ENCODE measurements at regions of chr3 and their contacts with region 1.

Region 1: GRCh38 chr3:73508330-73508954 is 116.3 kb downstream of the PDZRN3 start:
- DNase-seq: peak; percentile 50 to 51
- ATAC-seq: peak; percentile 79 to 80
- H3K4me3 ChIP-seq: no peak overlapping the region
- H3K27ac ChIP-seq: peak overlapping the region; percentile 57 to 70 (median 66)
- H3K4me1 ChIP-seq: peaks cover 43 to 60% of the 10 kb centered on the region in 2 donors
- H3K27me3 ChIP-seq: no peaks in the 10 kb centered on the region
- CTCF ChIP-seq: peak; percentile 62 to 81 (median 76)
- POLR2A ChIP-seq: no peak

Region 2: DNA sequence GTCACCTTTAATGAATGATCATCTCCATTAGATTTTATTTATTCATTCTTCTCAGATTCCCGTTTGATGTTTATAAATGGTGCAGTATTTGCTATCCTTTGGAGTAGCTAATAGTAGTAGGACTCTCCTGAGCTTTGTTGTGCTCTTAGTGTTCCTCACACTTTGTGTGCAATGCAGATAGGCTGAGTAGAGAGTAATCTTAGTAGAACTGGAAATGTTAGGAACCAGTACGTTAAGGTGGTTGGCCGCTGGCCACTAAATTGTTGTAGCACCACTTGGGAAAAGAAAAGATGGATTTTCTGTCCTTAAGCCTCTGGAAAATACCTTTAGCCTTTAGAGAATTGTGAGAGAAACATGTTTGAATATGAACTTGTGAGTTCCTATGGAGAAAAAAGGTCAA is 466.9 kb before region 1 on chr3:
- in situ Hi-C with region 1: no loop called
- intact Hi-C with region 1: no loop called
- DNase-seq: no peak
- ATAC-seq: no peak
- H3K4me3 ChIP-seq: no peak overlapping the region
- H3K27ac ChIP-seq: peak overlapping the region in 2 of 4 donors; percentile 22 to 47
- H3K4me1 ChIP-seq: peaks cover 51 to 57% of the 10 kb centered on the region in 2 donors
- H3K27me3 ChIP-seq: no peaks in the 10 kb centered on the region
- CTCF ChIP-seq: no peak
- POLR2A ChIP-seq: no peak

Region 3: GRCh38 chr3:73602170-73602569 is 93.7 kb after region 1 on chr3:
- in situ Hi-C with region 1: loop called in 1 of 4 experiments (anchors 10 kb)
- intact Hi-C with region 1: no loop called
- DNase-seq: no peak
- ATAC-seq: no peak
- H3K4me3 ChIP-seq: no peak overlapping the region
- H3K27ac ChIP-seq: no peak overlapping the region
- H3K4me1 ChIP-seq: peaks cover 67 to 80% of the 10 kb centered on the region in 2 donors
- H3K27me3 ChIP-seq: no peaks in the 10 kb centered on the region
- CTCF ChIP-seq: no peak
- POLR2A ChIP-seq: no peak

Region 4: DNA sequence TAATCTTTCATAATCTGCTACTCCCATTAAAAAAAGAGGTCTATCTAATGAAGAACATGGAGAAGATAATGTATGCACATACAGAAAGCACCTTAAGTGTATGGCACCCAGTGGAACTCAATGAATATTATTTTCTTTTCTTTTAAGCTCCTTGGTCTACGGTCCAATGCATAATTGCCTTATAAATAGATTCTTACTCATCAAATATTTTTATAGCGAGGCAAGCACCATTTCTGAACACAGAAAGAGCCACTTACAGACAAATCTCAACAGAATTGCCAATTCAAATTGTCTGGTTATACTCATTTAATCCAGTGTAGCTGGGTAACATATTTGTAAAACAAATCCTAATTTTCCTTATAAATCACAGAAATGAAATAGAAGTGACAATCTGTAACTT is 110.0 kb after region 1 on chr3:
- in situ Hi-C with region 1: loop called in 1 of 4 experiments (anchors 5 kb)
- intact Hi-C with region 1: loop called (anchors 1 kb)
- DNase-seq: no peak
- ATAC-seq: no peak
- H3K4me3 ChIP-seq: no peak overlapping the region
- H3K27ac ChIP-seq: peak overlapping the region; percentile 71 to 94 (median 84)
- H3K4me1 ChIP-seq: peaks cover 86 to 87% of the 10 kb centered on the region in 2 donors
- H3K27me3 ChIP-seq: no peaks in the 10 kb centered on the region
- CTCF ChIP-seq: no peak
- POLR2A ChIP-seq: no peak

Region 5: DNA sequence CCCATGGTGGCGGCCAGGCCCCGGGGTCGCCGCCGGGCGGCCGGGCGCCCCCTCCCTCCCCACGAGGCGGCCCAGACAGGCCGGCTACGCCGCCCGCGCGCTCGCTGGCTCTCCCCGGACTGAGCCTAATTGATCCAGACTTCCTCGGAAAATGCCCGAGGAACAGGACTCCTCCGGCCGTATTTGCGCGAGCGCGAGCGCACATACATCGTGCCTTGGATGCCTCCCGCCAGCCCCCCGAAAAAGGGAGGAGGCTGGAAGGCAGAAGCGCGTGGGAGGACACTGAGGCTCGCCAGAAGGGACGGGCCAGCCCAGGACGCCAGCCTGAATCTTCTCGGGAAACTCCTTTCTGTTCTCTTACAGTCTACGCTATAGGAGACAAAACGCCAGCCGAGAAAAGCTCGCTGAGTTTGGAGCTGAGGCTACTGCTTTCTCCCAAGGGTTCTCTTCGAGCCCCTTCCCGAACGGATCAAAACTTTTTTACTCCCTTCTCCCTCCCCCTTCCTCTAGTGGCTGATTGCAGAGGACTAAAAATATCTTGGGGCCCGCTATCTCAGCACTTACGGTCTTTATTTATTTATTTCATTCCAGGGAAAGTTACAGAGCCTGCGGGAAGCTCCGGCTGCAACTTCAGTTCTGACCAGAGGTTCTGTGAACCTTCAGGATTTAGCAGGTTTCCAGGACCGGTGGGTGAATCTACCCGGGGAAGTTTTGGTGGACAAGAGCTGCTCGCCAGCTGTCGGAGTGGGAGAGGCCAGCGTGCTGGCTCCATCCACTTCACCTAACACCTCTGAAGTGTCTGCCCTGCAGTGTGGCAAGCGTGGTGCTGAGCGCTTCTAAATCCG is 116.6 kb after region 1 on chr3 and contains the start of gene PDZRN3:
- in situ Hi-C with region 1: no loop called
- intact Hi-C with region 1: loop called (anchors 1 kb)
- DNase-seq: peak; percentile 41 to 44
- ATAC-seq: peak; percentile 46 to 48
- H3K4me3 ChIP-seq: peak within 1 kb of the TSS; percentile 71 to 93 (median 78)
- H3K27ac ChIP-seq: peak within 1 kb of the TSS; percentile 89 to 94 (median 92)
- H3K4me1 ChIP-seq: peaks cover 34 to 56% of the 10 kb centered on the region in 2 donors
- H3K27me3 ChIP-seq: no peaks in the 10 kb centered on the region
- CTCF ChIP-seq: peak in 1 of 5 experiments; percentile 3
- POLR2A ChIP-seq: peak; percentile 64 to 83
- total RNA-seq, gene PDZRN3: 9.1 to 30.3 (median 24.7) TPM

Region 6: DNA sequence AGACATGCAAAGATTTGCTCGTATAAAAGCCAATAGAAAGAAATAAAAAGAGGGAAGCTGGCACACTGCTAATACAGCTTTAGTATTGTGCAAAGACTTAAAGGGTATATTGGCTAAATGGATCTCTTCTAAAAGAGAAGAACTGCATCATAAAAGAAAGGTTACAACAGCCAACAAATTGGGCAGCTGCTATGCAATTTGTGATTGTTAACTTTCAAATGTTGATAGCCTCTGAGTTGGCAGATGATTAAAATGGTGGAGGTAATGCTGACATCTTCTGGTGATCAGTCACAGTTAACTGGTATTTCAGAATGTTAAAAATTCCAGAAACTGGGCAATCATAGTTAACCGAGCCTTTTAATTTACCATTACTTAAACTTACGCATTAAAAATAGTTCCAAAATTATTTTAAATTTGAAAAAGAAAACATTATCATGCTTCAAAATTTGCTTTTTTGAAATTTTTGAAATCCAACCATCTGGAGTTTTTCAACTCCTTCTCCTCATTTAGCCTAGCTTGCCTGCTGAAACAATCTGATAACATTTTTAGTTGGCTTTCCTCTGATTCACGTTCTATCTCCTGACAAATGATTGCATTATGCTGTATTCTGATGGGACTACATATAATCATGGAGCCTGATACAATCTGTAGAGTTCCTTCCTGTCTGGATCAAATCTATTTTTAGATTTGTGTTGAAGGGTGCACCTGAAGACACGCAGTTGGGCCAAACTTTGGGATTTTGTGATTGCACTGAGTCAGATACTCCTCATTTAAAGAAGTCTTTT is 260.3 kb after region 1 on chr3:
- in situ Hi-C with region 1: no loop called
- intact Hi-C with region 1: loop called (anchors 1 kb)
- DNase-seq: no peak
- ATAC-seq: no peak
- H3K4me3 ChIP-seq: no peak overlapping the region
- H3K27ac ChIP-seq: no peak overlapping the region
- H3K4me1 ChIP-seq: peaks cover 9 to 20% of the 10 kb centered on the region in 2 donors
- H3K27me3 ChIP-seq: no peaks in the 10 kb centered on the region
- CTCF ChIP-seq: peak in 1 of 5 experiments; percentile 20
- POLR2A ChIP-seq: no peak

Region 7: GRCh38 chr3:73848173-73848906 is 339.9 kb after region 1 on chr3:
- in situ Hi-C with region 1: loop called in 2 of 4 experiments (anchors 10 kb)
- intact Hi-C with region 1: loop called (anchors 1 kb)
- DNase-seq: no peak
- ATAC-seq: peak in 1 of 2 donors; percentile 52
- H3K4me3 ChIP-seq: no peak overlapping the region
- H3K27ac ChIP-seq: no peak overlapping the region
- H3K4me1 ChIP-seq: no peaks in the 10 kb centered on the region
- H3K27me3 ChIP-seq: no peaks in the 10 kb centered on the region
- CTCF ChIP-seq: peak; percentile 38 to 73 (median 56)
- POLR2A ChIP-seq: no peak